Heart left ventricle (tissue), 16 donors: ENCODE measurements at regions of chr20 and their contacts with region 1.

Region 1: DNA sequence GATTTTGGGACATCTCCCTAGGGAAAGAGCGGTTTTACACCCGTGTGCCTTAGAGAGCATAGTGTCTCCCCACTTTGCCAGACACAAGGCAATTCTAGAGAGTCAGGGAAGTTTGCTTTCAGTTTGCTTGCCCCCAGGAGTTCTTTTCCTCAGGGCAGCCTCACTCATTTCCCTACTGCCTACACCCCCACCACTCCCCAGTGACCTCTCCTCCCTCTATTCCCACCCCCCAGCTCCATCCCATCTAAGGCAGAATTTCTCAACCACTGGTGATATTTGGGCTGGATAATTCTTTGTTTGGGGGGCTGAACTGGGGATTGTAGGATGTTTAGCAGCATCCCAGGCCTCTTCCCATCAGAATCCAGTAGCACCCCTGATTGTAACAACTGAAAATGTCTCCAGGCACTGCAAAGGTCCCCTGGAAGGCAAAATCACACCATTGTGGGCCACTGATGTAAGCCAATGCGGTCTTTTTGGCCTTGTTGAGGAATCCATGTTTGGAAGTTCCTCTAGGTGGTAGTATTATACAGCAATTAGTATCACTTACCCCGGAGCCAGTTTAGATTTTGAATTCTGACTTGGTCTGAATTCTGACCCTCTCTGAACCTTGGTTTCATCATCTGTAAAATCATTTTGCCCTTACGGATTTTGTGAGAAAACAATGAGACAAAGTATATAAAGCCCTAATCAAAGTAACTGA is 1.3 kb downstream of the EPPIN start:
- DNase-seq: no peak
- ATAC-seq: no peak
- H3K4me3 ChIP-seq: no peak overlapping the region
- H3K27ac ChIP-seq: no peak overlapping the region
- H3K4me1 ChIP-seq: no peaks in the 10 kb centered on the region
- H3K27me3 ChIP-seq: peaks cover 0 to 19% (median 4%) of the 10 kb centered on the region in 9 donors
- CTCF ChIP-seq: peak in 8 of 12 donors; percentile 6 to 41 (median 24)
- POLR2A ChIP-seq: no peak

Region 2: DNA sequence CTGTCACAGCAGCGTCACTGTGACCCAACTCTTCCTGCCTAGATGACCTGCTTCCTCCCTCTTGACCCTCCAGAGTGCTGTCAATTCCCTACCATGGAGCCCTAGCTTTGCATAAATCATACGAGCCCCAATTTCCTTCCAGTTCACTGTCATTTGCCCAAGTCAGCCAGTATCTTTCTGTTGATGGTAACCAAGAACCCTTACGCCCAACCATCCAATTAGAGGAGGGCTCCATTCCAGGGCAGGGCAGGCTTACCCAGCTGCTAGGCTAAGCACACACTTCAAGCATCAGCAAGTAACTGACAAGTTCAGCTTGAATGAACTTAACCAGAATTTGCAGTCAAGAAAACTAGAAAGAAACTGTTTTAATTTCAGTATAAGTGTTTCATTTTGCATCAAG is 220.1 kb after region 1 on chr20:
- intact Hi-C with region 1: loop called in 4 of 10 experiments (anchors 1 to 10 kb)
- DNase-seq: no peak
- ATAC-seq: no peak
- H3K4me3 ChIP-seq: no peak overlapping the region
- H3K27ac ChIP-seq: no peak overlapping the region
- H3K4me1 ChIP-seq: peaks cover 0 to 3% (median 2%) of the 10 kb centered on the region in 12 donors
- H3K27me3 ChIP-seq: no peaks in the 10 kb centered on the region
- CTCF ChIP-seq: no peak
- POLR2A ChIP-seq: no peak